ENCODE measurements at regions of chr19 and their contacts with region 1.

Region 1: DNA sequence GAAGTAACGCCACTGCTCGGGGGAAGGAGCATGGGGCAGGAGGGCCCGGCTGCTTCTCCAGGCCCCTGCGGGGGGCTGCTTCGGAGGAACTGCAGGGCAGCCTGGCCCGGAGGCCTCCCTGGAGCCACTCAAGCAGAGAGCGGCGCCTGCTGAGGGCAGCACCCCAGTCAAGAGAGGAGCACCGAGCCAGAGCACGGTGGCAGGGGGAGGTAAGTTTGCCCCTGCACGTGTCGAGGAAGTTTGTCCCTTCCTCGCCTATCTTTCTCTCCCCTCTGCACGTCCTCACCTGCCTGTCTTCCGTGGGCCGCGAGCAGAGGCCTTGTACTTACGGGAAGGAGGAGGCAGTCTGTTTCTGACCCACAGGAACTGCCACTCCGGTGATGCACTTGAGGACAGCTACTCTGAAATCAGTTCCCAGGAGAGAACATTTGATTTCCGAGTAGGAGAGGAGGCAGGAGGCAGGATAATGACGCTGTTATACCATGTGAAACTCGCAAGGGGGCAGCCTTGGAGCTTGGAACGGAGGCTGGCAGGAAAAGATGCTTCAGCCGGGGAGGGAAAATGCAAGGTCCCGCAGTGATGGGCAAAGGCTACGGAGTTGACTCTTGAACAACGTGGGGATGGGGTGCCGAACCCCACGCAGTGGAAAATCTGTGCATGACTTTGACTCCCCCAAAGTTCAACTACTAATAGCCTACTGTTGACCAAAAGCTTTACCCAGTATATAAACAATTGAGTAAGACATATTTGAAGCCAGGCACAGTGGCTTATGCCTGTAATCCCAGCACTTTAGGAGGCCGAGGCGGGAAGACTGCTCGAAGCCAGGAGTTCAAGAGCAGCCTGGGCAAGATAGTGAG is 5.0 kb downstream of the FFAR1 start:
- DNase-seq: peak; percentile 76 to 86 (median 80)
- ATAC-seq: peak; percentile 92
- H3K4me3 ChIP-seq: no peak overlapping the region
- H3K27ac ChIP-seq: no peak overlapping the region
- H3K4me1 ChIP-seq: peaks cover 0 to 42% of the 10 kb centered on the region in 2 donors
- H3K27me3 ChIP-seq: peaks cover 0 to 15% of the 10 kb centered on the region in 2 donors
- CTCF ChIP-seq: peak; percentile 65 to 84

Region 2: DNA sequence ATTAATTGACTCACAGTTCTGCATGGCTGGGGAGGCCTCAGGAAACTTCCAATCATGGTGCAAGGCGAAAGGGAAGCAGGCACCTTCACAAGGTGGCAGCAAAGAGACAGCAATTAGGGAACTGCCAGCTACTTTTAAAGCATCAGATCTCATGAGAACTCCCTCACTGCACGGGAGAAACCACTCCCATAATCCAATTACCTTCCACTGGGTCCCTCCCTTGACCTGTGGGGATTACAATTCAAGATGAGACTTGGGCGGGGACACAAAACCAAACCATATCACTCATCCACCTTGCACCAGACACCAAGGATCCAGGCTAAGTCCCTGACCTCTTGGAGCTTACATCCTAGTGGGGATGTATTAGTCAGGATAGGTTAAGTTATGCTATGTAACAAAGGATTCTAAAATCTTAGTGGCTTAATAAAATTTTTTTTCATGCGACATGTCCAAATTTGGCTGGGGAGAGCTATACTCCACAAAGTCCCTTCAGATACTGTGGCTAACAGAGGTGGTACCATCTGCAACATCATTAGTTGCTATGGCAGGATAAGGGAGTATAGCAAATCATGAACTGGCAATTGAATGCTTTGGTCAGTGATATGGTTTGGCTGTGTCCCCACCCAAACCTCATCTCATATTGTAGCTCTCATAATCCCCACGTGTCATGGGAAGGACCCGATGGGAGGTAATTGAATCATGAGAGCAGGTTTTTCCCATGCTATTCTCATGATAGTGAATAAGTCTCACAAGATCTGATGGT is 115.9 kb before region 1 on chr19:
- intact Hi-C with region 1: no loop called
- DNase-seq: peak in 1 of 4 donors; percentile 21
- ATAC-seq: peak; percentile 44
- H3K4me3 ChIP-seq: no peak overlapping the region
- H3K27ac ChIP-seq: no peak overlapping the region
- H3K4me1 ChIP-seq: no peaks in the 10 kb centered on the region
- H3K27me3 ChIP-seq: no peaks in the 10 kb centered on the region
- CTCF ChIP-seq: peak in 1 of 2 donors; percentile 17

Region 3: GRCh38 chr19:35269421-35270117 is 83.1 kb before region 1 on chr19:
- intact Hi-C with region 1: no loop called
- DNase-seq: peak; percentile 75 to 96 (median 90)
- ATAC-seq: peak; percentile 69
- H3K4me3 ChIP-seq: peak overlapping the region; percentile 48 to 80
- H3K27ac ChIP-seq: peak overlapping the region; percentile 87 to 93
- H3K4me1 ChIP-seq: peaks cover 15 to 69% of the 10 kb centered on the region in 2 donors
- H3K27me3 ChIP-seq: no peaks in the 10 kb centered on the region
- CTCF ChIP-seq: peak; percentile 74 to 90

Region 4: GRCh38 chr19:35468637-35469036 is 116.0 kb after region 1 on chr19:
- intact Hi-C with region 1: loop called in 1 of 2 experiments (anchors 10 kb)
- DNase-seq: peak in 2 of 4 donors; percentile 56 to 80
- ATAC-seq: peak; percentile 93
- H3K4me3 ChIP-seq: no peak overlapping the region
- H3K27ac ChIP-seq: no peak overlapping the region
- H3K4me1 ChIP-seq: peaks cover 0 to 20% of the 10 kb centered on the region in 2 donors
- H3K27me3 ChIP-seq: no peaks in the 10 kb centered on the region
- CTCF ChIP-seq: peak; percentile 41 to 72

Region 5: DNA sequence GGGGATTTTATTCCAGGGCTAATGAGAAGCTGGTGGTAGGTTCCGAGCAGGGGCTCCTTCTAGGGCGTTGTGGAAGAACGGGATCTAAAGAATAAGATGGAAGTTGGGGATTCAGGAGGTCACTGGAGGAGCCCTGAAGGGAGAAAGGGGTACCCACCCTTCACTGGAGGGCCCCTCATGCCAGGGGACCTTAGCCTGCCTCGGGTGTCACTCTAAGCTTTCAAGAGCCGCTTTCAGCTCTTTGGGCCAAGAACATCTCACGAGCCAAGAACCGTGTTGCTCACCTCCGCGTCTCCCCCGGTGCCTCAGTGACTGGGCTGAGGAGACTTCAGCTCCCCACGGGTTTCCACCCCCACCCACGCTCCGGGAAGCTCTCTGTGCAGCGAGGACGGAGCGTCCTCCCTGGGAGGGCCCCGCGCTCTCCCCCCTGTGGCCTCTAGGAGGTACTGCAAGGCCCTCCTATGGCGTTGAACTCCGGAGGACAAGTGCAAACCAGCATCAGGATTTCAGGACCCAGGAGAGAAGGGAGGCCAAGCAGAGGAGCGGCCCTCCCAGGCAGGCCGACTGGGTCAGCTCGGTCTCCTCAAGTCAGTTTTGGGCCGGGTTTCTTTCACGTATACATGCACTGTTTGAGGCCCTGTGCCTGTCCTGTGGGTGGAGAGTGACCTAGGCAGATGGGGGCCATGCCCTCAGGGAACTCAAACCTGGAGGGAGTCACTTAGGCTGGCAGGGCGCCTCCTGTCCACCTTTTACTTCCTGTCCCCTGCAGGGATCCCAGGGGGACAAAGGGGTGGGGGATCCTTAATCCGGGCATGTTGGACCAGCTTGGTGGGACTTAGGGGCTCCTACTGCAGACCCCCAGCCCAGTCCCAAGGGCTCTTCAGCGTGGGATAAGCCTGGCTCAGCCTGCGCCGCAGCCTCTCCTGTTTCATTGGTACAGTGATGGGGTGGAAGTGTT is 142.7 kb after region 1 on chr19:
- intact Hi-C with region 1: loop called in 1 of 2 experiments (anchors 10 kb)
- DNase-seq: peak; percentile 50 to 94 (median 66)
- ATAC-seq: peak; percentile 99
- H3K4me3 ChIP-seq: no peak overlapping the region
- H3K27ac ChIP-seq: no peak overlapping the region
- H3K4me1 ChIP-seq: peaks cover 0 to 8% of the 10 kb centered on the region in 2 donors
- H3K27me3 ChIP-seq: peaks cover 0 to 2% of the 10 kb centered on the region in 2 donors
- CTCF ChIP-seq: peak; percentile 99